Gastrocnemius medialis (tissue), 4 donors: ENCODE measurements at regions of chr5 and their contacts with region 1.

Region 1: DNA sequence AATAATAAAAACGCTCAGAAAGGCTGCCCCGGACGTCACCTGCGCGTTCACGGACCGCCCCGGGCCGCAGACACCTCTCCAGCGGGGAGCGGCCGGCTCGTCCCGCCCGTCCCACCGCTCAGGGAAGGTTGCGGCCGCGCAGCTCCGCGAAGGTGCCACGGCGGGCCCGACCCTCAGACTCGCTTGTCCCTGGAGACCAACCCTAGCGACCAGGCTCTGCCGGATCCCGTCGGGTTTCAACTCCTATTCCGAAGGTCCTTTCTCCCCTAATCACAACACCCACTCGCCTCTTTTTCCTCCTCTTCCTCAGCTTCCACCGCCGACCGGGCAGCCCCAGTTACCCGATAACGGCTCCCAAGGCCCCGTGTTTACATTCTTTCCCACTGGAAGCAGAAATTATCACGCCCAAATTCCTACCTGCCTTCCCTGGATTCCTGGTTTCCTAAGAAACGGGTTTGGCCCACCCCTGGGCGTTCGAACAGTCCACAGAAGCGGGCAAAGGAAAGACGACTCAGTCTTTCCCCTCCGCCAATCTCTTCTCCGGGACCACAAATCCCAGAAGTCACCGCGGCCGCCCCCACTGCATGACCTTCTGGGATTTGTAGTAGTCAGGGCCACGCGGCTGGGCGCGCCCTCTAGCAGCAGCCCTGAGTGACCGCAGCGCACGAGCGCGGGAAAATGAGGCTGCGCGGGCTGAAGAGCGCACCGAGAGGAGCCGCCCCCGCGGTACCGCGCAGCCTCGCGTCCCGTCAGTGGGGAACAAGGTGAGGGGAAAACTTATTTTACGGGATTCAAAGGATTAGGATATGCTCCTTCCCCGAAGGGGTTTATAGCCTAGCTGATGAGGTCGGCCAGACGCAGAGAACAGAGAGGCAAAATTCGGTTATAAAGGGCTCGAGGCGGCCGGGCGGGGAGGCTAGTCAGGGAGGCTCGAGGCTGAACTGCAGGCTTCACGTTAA is at the start of gene TTC33:
- DNase-seq: peak; percentile 94
- ATAC-seq: peak; percentile 96
- H3K4me3 ChIP-seq: peak within 1 kb of the TSS; percentile 82 to 98 (median 85)
- H3K27ac ChIP-seq: peak within 1 kb of the TSS; percentile 91 to 95 (median 92)
- H3K4me1 ChIP-seq: peaks cover 10% of the 10 kb centered on the region in 2 donors
- H3K27me3 ChIP-seq: no peaks in the 10 kb centered on the region
- CTCF ChIP-seq: peak; percentile 25 to 75 (median 60)
- POLR2A ChIP-seq: peak; percentile 61
- total RNA-seq, gene TTC33: 20.2 to 49.0 (median 32.6) TPM

Region 2: DNA sequence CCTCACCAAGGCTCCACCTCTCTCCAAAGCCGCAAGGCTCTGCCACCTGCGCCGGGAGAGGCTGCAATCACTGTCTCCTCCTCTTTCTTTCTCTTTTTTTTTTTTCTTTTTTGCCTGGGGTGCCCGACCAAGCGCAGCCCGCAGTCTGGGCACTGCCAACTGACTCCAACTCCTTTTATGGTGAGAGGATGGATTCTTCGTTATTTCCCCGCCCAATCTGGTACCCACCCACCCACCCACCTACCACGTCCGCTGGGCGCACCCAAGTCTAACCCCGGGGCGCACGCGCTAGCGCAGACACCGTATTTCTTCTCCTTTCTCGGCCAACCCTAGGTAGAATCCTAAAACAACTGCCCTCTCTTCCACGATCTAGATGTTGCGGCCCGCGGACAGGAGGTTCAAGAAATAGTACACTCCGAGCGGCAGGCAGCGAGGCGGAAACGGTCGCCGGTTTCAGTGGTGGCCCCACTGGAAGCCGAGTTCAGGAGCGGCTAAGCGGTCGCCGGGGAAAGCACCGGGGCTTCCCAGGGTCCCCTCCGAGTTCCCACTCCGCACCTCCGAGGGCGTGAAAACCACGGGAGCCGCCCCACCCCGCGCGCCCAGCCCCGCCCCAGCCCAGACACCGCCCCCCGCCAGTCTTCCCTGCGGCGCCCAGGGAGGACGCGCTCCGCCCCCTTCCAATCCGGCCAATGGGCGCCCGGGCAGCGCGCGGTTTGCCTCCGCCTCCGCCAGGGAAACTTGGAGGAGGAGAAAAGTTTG is 76.4 kb before region 1 on chr5:
- in situ Hi-C with region 1: no loop called
- intact Hi-C with region 1: loop called (anchors 5 kb)
- DNase-seq: peak; percentile 83
- ATAC-seq: peak; percentile 86 to 88
- H3K4me3 ChIP-seq: peak overlapping the region; percentile 78 to 80 (median 80)
- H3K27ac ChIP-seq: peak overlapping the region; percentile 76 to 87 (median 82)
- H3K4me1 ChIP-seq: peaks cover 9 to 20% of the 10 kb centered on the region in 2 donors
- H3K27me3 ChIP-seq: peaks cover 23 to 49% (median 40%) of the 10 kb centered on the region in 3 donors
- CTCF ChIP-seq: no peak
- POLR2A ChIP-seq: peak; percentile 16 to 21

Region 3: DNA sequence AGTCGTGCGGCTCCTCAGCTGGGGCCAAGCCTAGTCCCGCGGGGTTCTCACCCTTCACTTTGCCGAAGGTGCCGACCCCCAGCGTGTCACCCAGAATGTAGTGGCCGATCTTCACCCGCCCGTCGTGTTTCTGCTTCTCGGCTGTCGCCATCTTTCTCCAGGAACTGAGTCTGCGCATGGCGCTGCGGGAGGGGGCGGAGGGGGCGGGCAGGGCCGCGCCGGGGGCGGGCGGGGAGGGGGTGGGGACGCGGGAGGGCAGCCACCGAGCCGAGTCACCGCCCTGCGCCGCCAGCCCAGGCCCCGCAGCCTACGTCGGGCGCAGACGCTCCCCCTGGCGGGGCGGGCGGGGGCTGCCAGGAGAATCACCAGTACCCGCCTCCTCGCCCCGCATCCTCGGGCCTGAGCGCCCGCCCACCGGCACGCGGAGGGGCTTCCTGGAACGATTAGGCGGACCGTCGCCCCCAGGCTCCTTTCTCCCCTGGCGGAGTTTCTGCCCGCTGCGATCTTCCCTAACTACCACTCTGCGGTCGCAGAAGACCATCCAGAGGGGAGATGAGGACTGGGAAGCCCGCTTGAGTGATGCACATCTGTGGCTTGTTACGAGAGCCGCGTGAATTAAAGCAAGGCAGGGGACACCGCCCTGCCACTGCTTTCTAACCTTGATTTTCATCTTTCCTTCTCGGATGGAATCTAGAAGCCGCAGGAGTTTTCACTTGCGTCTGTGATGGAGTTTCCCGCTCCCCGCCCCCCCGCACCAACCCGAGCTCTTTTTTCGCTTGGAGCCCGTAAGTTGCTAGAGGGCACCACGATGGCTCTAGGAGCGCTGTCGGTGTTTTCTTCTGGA is 42.5 kb after region 1 on chr5 and contains the start of gene PRKAA1:
- in situ Hi-C with region 1: no loop called
- intact Hi-C with region 1: loop called (anchors 1 kb)
- DNase-seq: peak; percentile 74 to 86
- ATAC-seq: peak; percentile 85 to 86
- H3K4me3 ChIP-seq: peak within 1 kb of the TSS; percentile 91 to 100 (median 99)
- H3K27ac ChIP-seq: peak within 1 kb of the TSS; percentile 89 to 99 (median 98)
- H3K4me1 ChIP-seq: peaks cover 19 to 21% of the 10 kb centered on the region in 2 donors
- H3K27me3 ChIP-seq: no peaks in the 10 kb centered on the region
- CTCF ChIP-seq: peak; percentile 27 to 86 (median 68)
- POLR2A ChIP-seq: peak; percentile 41 to 57
- total RNA-seq, gene PRKAA1: 26.8 to 51.9 (median 36.9) TPM

Region 4: DNA sequence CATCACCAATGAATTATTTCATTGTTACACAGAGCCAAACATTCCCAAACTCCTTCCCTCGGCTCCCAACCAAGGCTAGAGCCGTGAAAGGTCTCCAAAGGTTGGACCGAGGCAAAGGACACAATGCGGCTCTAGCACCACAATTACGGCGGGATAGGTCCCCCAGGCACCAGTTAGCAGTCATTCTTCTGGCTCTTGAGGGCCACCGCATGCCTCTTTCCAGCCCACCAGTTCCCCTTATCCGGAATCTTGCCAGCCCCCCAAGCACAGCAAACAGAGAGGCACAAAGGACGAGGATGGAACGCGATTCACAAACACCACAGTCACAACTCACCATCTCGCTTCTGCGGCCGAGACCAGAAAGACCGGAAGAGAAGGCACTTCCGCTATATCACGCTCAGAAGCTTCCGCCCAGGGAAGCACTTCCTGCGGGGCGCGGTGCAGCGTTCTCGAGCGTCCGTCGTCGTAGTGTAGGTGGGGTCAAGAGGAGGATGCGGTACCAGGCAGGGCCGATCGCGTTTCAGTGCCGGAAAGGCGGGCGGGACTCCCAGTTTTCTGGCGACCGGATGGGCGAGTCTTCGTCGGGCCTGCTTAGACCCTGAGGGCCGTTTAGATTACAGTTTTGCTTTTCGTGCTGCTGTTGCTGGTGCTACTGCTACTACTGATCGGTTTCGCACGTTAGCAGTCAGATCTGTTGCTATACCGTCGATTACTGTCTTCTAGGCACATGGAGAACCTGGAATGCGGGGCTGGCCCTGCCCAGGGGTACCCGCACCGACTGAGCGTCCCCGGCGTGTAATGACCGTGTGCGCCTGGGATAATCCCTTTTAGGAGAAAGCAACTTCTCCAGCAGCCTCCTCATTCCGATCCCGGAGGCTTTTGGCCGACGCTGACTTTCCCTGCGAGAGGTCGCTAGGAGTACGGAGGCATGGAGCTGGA is 79.4 kb after region 1 on chr5 and contains the start of gene RPL37:
- in situ Hi-C with region 1: no loop called
- intact Hi-C with region 1: loop called (anchors 1 kb)
- DNase-seq: peak; percentile 95 to 96
- ATAC-seq: peak; percentile 98 to 99
- H3K4me3 ChIP-seq: peak within 1 kb of the TSS; percentile 73 to 95 (median 82)
- H3K27ac ChIP-seq: peak within 1 kb of the TSS; percentile 85 to 97 (median 94)
- H3K4me1 ChIP-seq: peaks cover 27% of the 10 kb centered on the region in 2 donors
- H3K27me3 ChIP-seq: no peaks in the 10 kb centered on the region
- CTCF ChIP-seq: peak in 1 of 5 experiments; percentile 8
- POLR2A ChIP-seq: peak; percentile 87 to 89
- total RNA-seq, gene RPL37: 42.4 to 155 (median 92.9) TPM

Region 5: DNA sequence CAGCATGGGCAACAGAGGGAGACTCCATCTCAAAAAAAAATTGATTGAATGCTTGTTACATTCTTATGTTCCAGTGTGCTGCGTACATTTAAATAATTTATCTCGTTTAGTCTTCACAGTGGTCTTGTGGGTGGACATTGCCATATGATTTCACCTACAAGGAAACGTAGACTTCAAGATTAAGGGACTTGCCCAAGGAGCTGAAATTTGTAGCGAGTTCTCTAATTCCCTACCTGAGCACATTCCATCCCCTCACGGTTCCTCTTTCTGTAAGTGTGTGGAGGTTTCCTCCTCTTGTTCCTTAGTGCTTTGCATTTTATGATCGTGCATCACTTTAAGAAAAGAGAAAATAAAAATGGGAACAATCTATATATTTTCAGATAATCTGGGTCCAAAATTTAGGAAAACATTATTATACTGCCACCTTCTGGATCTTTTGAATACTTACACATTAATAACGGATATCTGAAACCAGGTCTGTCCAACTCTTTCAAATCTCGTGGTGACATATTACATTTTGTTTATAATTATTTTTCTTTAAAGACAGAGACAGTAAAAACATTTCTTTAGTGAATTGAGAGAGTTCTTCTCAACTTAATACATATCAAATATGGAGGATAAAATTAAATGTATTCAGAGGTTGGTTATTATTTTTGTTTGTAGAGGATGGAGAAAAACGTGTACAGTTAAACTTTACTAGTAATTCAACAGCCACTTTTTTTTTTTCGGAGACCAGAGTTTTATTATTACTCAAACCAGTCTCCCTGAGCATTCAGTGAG is 123.7 kb after region 1 on chr5:
- in situ Hi-C with region 1: loop called in 1 of 4 experiments (anchors 10 kb)
- intact Hi-C with region 1: loop called (anchors 5 kb)
- DNase-seq: no peak
- ATAC-seq: peak in 1 of 2 donors; percentile 30
- H3K4me3 ChIP-seq: no peak overlapping the region
- H3K27ac ChIP-seq: no peak overlapping the region
- H3K4me1 ChIP-seq: peaks cover 0 to 4% of the 10 kb centered on the region in 2 donors
- H3K27me3 ChIP-seq: no peaks in the 10 kb centered on the region
- CTCF ChIP-seq: peak; percentile 37 to 62 (median 40)
- POLR2A ChIP-seq: no peak